A673 (cell line): ENCODE measurements at regions of chr10 and their contacts with region 1.

Region 1: GRCh38 chr10:103888113-103888841 is 29.7 kb downstream of the STN1 start:
- DNase-seq: peak; percentile 73
- H3K4me3 ChIP-seq: no peak overlapping the region
- H3K27ac ChIP-seq: no peak overlapping the region
- H3K4me1 ChIP-seq: no peaks in the 10 kb centered on the region
- H3K27me3 ChIP-seq: no peaks in the 10 kb centered on the region
- CTCF ChIP-seq: peak; percentile 87

Region 2: GRCh38 chr10:102229810-102230263 is 1658.4 kb before region 1 on chr10:
- CTCF ChIA-PET with region 1: no interaction called
- POLR2A ChIA-PET with region 1: no interaction called
- intact Hi-C with region 1: no loop called
- DNase-seq: peak; percentile 84
- H3K4me3 ChIP-seq: peak overlapping the region; percentile 60
- H3K27ac ChIP-seq: no peak overlapping the region
- H3K4me1 ChIP-seq: peaks cover 19% of the 10 kb centered on the region
- H3K27me3 ChIP-seq: peaks cover 13% of the 10 kb centered on the region
- CTCF ChIP-seq: peak; percentile 97

Region 3: DNA sequence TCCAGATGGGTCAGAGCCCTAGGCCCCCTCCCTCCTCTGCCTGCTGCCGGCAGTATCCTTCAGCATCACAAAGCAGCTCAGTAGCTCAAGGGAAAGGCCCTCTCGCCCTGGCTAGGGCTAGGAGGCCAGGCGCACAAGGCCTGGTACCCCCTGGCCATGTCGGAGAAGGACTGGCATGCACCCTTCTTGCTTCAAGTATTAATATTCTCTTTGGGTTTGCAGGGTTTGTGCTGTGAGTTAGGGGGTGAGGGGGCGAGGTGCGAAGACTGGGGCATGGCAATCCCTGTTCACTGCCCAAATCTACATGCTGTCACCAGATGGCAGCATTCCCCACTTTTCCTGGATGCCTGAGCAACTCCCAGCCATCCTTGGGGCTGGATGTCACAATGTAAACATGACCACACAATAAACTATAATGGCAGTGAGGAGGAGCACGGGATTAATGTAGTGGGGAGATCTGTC is 289.6 kb before region 1 on chr10:
- CTCF ChIA-PET with region 1: no interaction called
- POLR2A ChIA-PET with region 1: no interaction called
- intact Hi-C with region 1: loop called (anchors 2 kb)
- DNase-seq: peak; percentile 78
- H3K4me3 ChIP-seq: no peak overlapping the region
- H3K27ac ChIP-seq: no peak overlapping the region
- H3K4me1 ChIP-seq: no peaks in the 10 kb centered on the region
- H3K27me3 ChIP-seq: no peaks in the 10 kb centered on the region
- CTCF ChIP-seq: peak; percentile 77

Region 4: DNA sequence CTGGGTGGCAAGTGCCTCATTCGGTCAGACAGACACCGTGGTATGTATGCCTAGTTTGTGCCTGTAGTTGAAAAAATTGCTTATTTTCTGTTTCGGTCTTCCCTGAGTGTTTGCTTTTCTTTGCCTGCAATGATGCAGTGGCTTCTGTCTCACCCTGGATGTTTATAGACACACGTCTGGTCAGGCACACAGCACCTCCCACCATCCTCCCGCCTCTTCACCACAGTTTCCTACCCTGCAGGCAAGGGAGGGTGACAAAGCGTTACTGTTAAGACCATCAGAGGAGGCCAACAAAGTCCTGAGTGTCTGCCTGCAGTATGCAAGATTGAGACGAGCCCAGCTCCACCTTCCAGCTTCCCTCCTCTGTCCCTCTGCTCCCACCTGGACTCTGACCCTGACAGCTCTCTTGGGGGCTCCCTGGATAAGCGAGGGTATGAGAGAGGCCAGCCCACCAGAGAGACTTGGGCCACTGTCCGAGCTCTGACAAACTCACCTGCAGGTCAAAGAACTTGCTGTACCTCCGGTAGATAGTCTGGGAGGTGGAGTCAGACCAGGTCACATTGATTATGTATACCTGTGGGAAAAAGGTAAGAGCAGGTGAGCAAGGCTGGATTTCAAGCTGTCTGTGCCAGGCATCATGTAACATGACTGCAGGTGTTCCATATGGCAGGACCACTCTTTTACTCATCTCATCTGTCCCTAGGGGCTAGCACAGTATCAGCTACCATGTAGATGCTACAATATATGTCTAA is 87.3 kb before region 1 on chr10:
- CTCF ChIA-PET with region 1: no interaction called
- POLR2A ChIA-PET with region 1: no interaction called
- intact Hi-C with region 1: no loop called
- DNase-seq: no peak
- H3K4me3 ChIP-seq: no peak overlapping the region
- H3K27ac ChIP-seq: no peak overlapping the region
- H3K4me1 ChIP-seq: peaks cover 56% of the 10 kb centered on the region
- H3K27me3 ChIP-seq: no peaks in the 10 kb centered on the region
- CTCF ChIP-seq: no peak

Region 5: DNA sequence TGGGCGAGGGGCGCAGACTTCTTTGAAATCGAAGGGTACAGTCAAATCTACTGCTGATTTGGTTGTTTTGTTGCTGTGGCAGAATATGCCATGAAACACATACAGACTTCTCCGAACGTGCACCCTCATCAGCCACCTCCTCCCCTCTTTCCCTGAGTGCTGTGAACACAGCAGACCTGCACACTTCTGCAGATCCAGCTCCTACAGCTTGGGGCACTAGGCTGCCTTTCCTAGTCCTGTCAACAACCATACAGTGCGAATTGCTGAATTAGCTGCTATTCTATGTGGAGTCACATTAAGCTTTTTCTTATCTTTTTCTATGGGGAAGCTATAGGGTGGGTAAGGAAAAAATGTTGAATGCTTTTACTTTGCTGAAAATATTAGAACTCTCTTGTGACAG is 139.9 kb after region 1 on chr10:
- CTCF ChIA-PET with region 1: interaction called, 4 read pairs
- POLR2A ChIA-PET with region 1: no interaction called
- intact Hi-C with region 1: loop called (anchors 5 kb)
- DNase-seq: peak; percentile 35
- H3K4me3 ChIP-seq: no peak overlapping the region
- H3K27ac ChIP-seq: no peak overlapping the region
- H3K4me1 ChIP-seq: no peaks in the 10 kb centered on the region
- H3K27me3 ChIP-seq: no peaks in the 10 kb centered on the region
- CTCF ChIP-seq: peak; percentile 49

Region 6: GRCh38 chr10:104109908-104110662 is 221.8 kb after region 1 on chr10:
- CTCF ChIA-PET with region 1: no interaction called
- POLR2A ChIA-PET with region 1: no interaction called
- intact Hi-C with region 1: no loop called
- DNase-seq: peak; percentile 18
- H3K4me3 ChIP-seq: no peak overlapping the region
- H3K27ac ChIP-seq: no peak overlapping the region
- H3K4me1 ChIP-seq: no peaks in the 10 kb centered on the region
- H3K27me3 ChIP-seq: no peaks in the 10 kb centered on the region
- CTCF ChIP-seq: no peak

Region 7: DNA sequence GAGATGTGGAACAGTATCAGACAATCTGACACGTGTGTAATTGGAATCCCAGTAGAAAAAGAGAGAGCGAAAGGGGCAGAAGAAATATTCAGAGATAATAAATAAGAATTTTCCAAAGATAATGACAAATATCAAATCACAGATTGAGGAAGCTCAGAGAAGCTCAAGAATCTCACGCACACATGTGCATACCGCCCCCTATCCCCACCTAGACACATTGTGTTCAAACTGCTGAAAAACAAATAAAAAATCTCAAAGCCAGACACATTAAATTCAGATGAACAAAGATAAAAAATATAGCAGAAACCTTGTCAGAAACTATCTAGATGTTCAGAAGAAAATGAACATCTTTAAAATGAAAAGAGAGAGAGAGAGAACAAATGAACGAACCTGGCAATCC is 250.9 kb after region 1 on chr10:
- CTCF ChIA-PET with region 1: interaction called, 11 read pairs
- POLR2A ChIA-PET with region 1: no interaction called
- intact Hi-C with region 1: no loop called
- DNase-seq: no peak
- H3K4me3 ChIP-seq: no peak overlapping the region
- H3K27ac ChIP-seq: no peak overlapping the region
- H3K4me1 ChIP-seq: no peaks in the 10 kb centered on the region
- H3K27me3 ChIP-seq: peaks cover 17% of the 10 kb centered on the region
- CTCF ChIP-seq: peak; percentile 60

Region 8: DNA sequence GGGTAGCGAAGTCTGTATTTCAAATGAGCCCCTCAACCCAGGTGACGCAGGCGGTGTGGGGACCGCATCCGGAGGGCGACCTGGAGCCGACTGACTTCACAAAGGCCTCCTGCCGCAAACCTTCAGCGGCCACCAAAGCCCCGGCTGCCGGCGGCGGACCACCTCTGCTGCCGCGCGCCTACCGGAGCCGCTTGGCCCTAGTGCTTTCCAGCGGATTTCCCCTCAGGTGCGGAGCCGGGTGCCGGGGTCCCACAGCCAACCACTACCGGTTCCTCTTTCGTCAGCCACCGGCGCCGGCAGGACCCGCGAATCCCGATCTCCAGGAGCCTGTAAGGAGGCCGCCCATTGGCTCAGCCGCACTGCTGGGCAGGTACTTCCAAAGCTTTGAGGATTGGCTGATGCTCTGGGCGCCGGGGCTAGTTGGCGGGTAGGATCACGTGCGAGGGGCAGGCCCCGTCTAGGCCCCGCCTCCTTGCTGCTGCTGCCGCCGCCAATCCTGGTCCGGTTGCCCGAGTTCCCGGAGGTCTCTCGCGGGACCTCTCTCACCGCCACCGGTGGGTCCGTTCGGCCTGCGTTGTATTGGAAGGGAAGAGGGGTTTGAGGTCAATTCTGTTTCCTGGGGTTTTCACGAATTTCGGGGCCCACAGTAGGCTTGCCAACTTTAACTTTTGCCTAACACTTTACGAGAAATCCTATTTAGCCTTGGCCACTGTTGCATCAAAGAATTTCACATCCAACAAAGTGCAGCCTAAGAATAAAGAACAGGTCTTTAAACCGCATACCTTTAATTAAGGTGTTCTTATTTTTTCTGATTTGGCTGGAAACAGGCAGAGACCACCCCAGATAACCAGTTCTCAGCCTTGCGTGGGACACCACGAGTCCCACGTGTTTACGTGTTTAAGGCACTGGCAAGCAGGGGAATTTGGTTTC is 380.7 kb after region 1 on chr10 and contains the start of gene GSTO2:
- CTCF ChIA-PET with region 1: interaction called, 8 read pairs
- POLR2A ChIA-PET with region 1: no interaction called
- intact Hi-C with region 1: loop called (anchors 5 kb)
- DNase-seq: peak; percentile 99
- H3K4me3 ChIP-seq: peak within 1 kb of the TSS; percentile 68
- H3K27ac ChIP-seq: peak within 1 kb of the TSS; percentile 81
- H3K4me1 ChIP-seq: peaks cover 11% of the 10 kb centered on the region
- H3K27me3 ChIP-seq: no peaks in the 10 kb centered on the region
- CTCF ChIP-seq: no peak
- total RNA-seq, gene GSTO2: 0.26 and 1.4 TPM in 2 replicates